ENCODE measurements at regions of chrX and their contacts with region 1.

Region 1: DNA sequence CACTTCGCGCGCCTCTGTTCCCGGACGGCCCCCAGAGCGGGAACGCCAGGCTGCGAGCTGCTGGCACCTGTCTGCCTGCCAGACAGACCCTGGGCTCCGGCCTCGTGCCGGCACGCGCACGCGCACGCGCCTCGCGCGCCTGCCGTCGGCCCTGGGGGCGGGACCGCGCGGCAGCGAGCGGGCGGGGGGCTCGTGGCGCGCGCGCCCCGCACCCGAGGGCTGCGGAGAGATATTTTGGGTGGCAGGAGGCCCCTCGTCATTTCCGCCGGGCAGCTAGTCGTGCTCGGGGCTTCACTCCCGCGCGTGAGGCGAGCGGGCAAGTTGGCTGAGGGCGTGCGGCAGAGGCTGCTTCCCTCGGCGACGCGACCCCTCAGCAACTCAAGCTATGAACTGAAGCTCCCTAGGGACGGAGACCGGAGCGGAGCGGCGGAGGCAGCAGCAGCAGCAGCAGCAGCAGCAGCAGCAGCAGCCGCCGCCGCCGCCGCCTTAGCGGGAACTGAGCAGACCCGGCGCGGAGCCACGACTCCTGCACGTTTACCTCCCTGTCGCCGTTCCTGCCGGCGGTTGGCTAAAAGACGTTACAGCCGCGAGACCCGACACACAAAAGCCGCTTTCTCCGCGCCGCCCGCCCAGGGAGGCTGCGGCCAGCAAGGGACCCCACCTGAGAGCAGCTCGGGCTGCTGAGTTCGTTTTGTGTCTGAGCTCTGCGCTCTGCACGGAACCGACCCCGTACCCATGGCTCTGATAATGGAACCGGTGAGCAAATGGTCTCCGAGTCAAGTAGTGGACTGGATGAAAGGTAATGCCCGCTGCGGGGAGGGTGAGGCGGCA is at the start of gene CNKSR2:
- DNase-seq: peak; percentile 60
- H3K4me3 Mint-ChIP-seq: peak within 1 kb of the TSS; percentile 91
- H3K27ac Mint-ChIP-seq: peak within 1 kb of the TSS; percentile 40
- H3K4me1 Mint-ChIP-seq: peaks cover 14% of the 10 kb centered on the region
- H3K27me3 Mint-ChIP-seq: peaks cover 6% of the 10 kb centered on the region
- total RNA-seq, gene CNKSR2: 7.4 and 9.1 TPM in 2 replicates

Region 2: GRCh38 chrX:20530406-20530921 is 843.9 kb before region 1 on chrX:
- intact Hi-C with region 1: loop called (anchors 2 kb)
- DNase-seq: peak; percentile 19
- H3K4me3 Mint-ChIP-seq: no peak overlapping the region
- H3K27ac Mint-ChIP-seq: no peak overlapping the region
- H3K4me1 Mint-ChIP-seq: peaks cover 11% of the 10 kb centered on the region
- H3K27me3 Mint-ChIP-seq: peaks cover 41% of the 10 kb centered on the region

Region 3: DNA sequence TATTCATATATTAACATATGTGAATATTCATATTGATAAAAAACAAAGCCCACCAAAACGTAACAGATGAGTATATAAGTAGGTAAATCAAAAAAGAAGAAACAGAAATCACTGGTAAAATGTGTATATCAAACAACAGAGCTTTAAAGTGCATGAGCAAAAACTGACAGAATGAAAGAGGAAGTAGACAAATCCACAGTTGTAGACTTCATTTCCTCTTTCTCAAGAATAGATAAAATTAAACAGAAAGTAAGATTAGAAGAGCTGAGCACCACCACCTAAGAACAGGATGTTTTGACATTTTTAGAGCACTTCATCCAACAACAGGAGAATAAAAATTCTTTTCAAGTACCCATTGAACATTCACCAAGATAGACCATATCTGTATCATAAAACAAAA is 64.4 kb after region 1 on chrX:
- intact Hi-C with region 1: loop called (anchors 2 kb)
- DNase-seq: no peak
- H3K4me3 Mint-ChIP-seq: peak overlapping the region; percentile 57
- H3K27ac Mint-ChIP-seq: peak overlapping the region; percentile 77
- H3K4me1 Mint-ChIP-seq: peaks cover 14% of the 10 kb centered on the region
- H3K27me3 Mint-ChIP-seq: no peaks in the 10 kb centered on the region

Region 4: DNA sequence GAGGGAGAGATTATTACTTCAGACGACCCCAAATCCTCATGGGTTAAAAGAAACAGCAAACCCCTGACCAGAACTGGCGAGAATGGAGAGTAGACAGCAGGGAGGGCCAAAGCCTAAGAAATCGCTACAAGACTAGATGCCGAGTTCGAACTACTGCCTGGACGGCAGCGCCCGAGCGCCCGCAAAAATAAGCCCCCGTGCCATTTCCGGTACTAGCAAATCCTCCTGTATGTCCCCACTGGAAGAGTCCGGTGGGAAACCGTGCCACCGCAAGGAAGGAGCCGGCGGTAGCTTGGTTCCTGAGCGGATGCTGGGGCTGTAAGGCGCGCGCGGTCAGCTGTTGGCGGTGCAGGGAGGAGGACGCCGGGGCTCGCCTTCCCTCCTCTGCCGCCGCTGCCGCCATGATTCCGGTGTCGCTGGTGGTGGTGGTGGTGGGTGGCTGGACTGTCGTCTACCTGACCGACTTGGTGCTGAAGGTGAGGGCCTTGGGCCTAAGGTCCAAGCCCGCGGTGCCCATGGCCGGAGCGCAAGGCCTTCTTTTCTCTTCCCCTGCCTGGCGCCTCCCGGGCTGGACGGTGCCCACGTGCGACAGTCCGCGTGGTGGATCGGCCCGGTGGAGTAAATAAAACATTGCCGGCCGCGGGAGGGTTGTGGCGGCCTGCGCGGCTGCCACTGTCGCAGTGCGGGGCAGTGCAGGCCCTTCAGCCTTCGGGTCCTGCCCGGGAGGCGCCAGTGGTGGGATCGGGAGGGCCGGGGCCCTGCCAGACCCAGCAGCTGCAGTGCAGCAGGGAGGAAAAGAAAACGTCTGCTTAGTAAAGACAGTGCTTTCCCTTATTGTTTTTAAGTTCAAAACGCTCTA is 465.2 kb after region 1 on chrX and contains the start of gene MBTPS2:
- intact Hi-C with region 1: loop called (anchors 10 kb)
- DNase-seq: peak; percentile 73
- H3K4me3 Mint-ChIP-seq: peak within 1 kb of the TSS; percentile 88
- H3K27ac Mint-ChIP-seq: peak within 1 kb of the TSS; percentile 90
- H3K4me1 Mint-ChIP-seq: peaks cover 14% of the 10 kb centered on the region
- H3K27me3 Mint-ChIP-seq: no peaks in the 10 kb centered on the region
- total RNA-seq, gene MBTPS2: 10.5 and 11.3 TPM in 2 replicates

Region 5: GRCh38 chrX:21972721-21973120 is 598.3 kb after region 1 on chrX:
- intact Hi-C with region 1: loop called (anchors 10 kb)
- DNase-seq: peak; percentile 20
- H3K4me3 Mint-ChIP-seq: peak overlapping the region; percentile 72
- H3K27ac Mint-ChIP-seq: peak overlapping the region; percentile 90
- H3K4me1 Mint-ChIP-seq: peaks cover 45% of the 10 kb centered on the region
- H3K27me3 Mint-ChIP-seq: no peaks in the 10 kb centered on the region